Activated naive CD4-positive, alpha-beta T cell treated with anti-CD3 and anti-CD28 coated beads for 36 hours (primary cell): ENCODE measurements at regions of chr4 and their contacts with region 1.

Region 1: GRCh38 chr4:119628308-119629141 is at the start of gene PDE5A:
- DNase-seq: peak; percentile 83
- H3K4me3 Mint-ChIP-seq: peak within 1 kb of the TSS; percentile 78
- H3K27ac Mint-ChIP-seq: no peak within 1 kb of the TSS
- H3K4me1 Mint-ChIP-seq: peaks cover 15% of the 10 kb centered on the region
- H3K27me3 Mint-ChIP-seq: peaks cover 11% of the 10 kb centered on the region
- total RNA-seq, gene PDE5A: 0.41 to 0.44 TPM

Region 2: DNA sequence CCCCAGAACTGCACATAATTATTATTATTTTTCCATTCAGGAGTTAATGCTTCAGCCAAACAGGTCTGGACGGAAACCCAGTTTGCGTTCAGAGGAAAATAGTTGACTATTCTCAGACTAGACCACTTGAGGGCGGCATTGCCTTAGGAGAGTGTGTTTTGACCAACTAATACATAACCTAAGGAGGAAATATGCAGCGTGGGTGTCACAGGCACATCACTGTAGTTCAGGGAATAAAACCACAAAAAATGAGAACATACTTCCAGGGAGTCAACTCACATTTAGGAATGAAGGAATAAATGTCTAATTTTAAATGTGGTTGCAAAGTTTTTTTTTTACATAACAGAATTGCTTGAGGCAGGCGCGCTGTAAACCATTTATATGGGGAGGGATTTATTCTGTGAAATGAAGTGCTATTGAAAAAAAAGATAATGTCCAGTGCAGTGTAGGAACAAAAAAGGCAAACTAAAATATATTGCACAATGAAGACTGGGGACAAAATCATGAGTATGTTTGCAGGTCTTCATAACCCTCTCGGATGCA is 646.6 kb before region 1 on chr4:
- CTCF ChIA-PET with region 1: interaction called, 3 read pairs
- intact Hi-C with region 1: loop called (anchors 1 kb)
- DNase-seq: peak; percentile 74
- H3K4me3 Mint-ChIP-seq: no peak overlapping the region
- H3K27ac Mint-ChIP-seq: no peak overlapping the region
- H3K4me1 Mint-ChIP-seq: no peaks in the 10 kb centered on the region
- H3K27me3 Mint-ChIP-seq: no peaks in the 10 kb centered on the region

Region 3: GRCh38 chr4:119314356-119314755 is 314.2 kb before region 1 on chr4:
- CTCF ChIA-PET with region 1: interaction called, 4 read pairs
- intact Hi-C with region 1: loop called (anchors 1 kb)
- DNase-seq: peak; percentile 43
- H3K4me3 Mint-ChIP-seq: no peak overlapping the region
- H3K27ac Mint-ChIP-seq: no peak overlapping the region
- H3K4me1 Mint-ChIP-seq: no peaks in the 10 kb centered on the region
- H3K27me3 Mint-ChIP-seq: no peaks in the 10 kb centered on the region

Region 4: GRCh38 chr4:119652998-119653397 is 24.5 kb after region 1 on chr4:
- CTCF ChIA-PET with region 1: interaction called, 13 read pairs
- intact Hi-C with region 1: no loop called
- DNase-seq: no peak
- H3K4me3 Mint-ChIP-seq: no peak overlapping the region
- H3K27ac Mint-ChIP-seq: no peak overlapping the region
- H3K4me1 Mint-ChIP-seq: no peaks in the 10 kb centered on the region
- H3K27me3 Mint-ChIP-seq: no peaks in the 10 kb centered on the region

Region 5: DNA sequence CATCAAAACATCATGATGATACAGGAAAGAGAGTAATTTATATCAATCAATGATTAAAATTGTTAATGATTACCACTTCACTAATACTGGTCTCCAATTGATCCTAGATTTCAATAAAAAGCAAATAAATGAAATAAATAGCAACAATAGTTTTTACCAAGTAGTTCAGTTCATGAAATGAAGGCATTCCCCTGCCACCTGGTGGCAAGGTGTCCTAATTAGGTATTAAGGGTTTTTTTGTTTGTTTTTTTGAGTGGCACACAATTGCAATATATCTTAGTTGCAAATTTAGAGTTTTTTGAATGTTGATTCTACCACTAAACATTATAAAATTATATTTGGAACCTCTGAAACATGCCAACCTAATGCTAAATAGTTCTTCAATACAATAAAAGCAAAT is 157.4 kb after region 1 on chr4:
- CTCF ChIA-PET with region 1: interaction called, 4 read pairs
- intact Hi-C with region 1: loop called (anchors 1 kb)
- DNase-seq: peak; percentile 9
- H3K4me3 Mint-ChIP-seq: no peak overlapping the region
- H3K27ac Mint-ChIP-seq: no peak overlapping the region
- H3K4me1 Mint-ChIP-seq: no peaks in the 10 kb centered on the region
- H3K27me3 Mint-ChIP-seq: peaks cover 9% of the 10 kb centered on the region

Region 6: DNA sequence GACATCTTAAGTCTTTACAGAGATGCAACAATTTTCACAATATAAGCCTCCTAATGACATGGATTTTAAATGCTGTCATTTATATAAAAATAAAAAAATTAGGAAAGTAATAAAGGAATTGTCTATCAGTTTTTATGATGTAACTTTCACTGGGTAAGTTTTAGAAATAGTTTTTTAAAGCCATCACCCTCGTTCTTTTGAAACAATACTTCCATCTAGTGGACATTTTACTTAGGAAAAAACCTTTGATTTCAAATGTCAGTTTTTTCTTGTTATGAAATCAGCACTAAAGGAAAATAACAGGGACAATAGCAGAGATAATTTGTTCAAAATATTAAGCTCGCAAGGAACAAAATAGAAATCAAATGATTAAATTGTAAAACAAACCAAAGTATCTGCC is 1468.1 kb after region 1 on chr4:
- CTCF ChIA-PET with region 1: no interaction called
- intact Hi-C with region 1: loop called (anchors 5 kb)
- DNase-seq: no peak
- H3K4me3 Mint-ChIP-seq: no peak overlapping the region
- H3K27ac Mint-ChIP-seq: no peak overlapping the region
- H3K4me1 Mint-ChIP-seq: no peaks in the 10 kb centered on the region
- H3K27me3 Mint-ChIP-seq: no peaks in the 10 kb centered on the region